T-cell (primary cell): ENCODE measurements at regions of chr17 and their contacts with region 1.

Region 1: GRCh38 chr17:61225229-61225882 is 174.3 kb upstream of the TBX2 start:
- DNase-seq: no peak
- ATAC-seq: no peak
- H3K4me3 ChIP-seq: no peak overlapping the region
- H3K4me3 Mint-ChIP-seq: no peak overlapping the region
- H3K27ac ChIP-seq: no peak overlapping the region
- H3K27ac Mint-ChIP-seq: no peak overlapping the region
- H3K4me1 ChIP-seq: peaks cover 21% of the 10 kb centered on the region in 2 experiments
- H3K4me1 Mint-ChIP-seq: peaks cover 31 to 39% (median 31%) of the 10 kb centered on the region in 3 donors
- H3K27me3 ChIP-seq: no peaks in the 10 kb centered on the region
- H3K27me3 Mint-ChIP-seq: no peaks in the 10 kb centered on the region

Region 2: DNA sequence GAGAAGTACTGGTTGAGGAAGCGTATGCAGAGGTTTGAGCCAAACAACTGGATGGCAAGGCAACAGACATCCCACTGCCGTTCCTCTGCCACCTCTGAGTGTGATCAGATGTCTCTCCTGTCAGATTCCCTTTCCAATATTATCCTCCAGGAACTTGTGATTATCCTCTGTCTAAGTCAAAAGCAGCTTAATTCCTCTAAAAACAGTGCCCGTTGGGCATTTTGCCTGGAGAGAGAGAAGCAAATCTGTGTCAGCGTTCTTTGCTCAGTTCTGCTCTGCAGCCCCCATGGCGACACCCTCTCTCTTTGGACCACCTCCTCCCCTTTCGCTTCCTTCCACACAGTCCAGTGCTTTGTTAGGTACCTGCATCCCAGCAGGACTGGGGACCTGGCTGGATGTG is 118.2 kb after region 1 on chr17:
- CTCF ChIA-PET with region 1: no interaction called
- POLR2A ChIA-PET with region 1: interaction called in 1 of 2 experiments, 10 read pairs
- DNase-seq: no peak
- ATAC-seq: no peak
- H3K4me3 ChIP-seq: no peak overlapping the region
- H3K4me3 Mint-ChIP-seq: no peak overlapping the region
- H3K27ac ChIP-seq: no peak overlapping the region
- H3K27ac Mint-ChIP-seq: no peak overlapping the region
- H3K4me1 ChIP-seq: no peaks in the 10 kb centered on the region
- H3K4me1 Mint-ChIP-seq: no peaks in the 10 kb centered on the region
- H3K27me3 ChIP-seq: no peaks in the 10 kb centered on the region
- H3K27me3 Mint-ChIP-seq: no peaks in the 10 kb centered on the region